ENCODE measurements at regions of chr16 and their contacts with region 1.

Region 1: GRCh38 chr16:85717393-85718121 is 28.8 kb upstream of the GINS2 start:
- DNase-seq: peak; percentile 71 to 84
- ATAC-seq: peak; percentile 47 to 69 (median 60)
- H3K4me3 ChIP-seq: no peak overlapping the region
- H3K27ac ChIP-seq: no peak overlapping the region
- H3K4me1 ChIP-seq: peaks cover 26% of the 10 kb centered on the region
- H3K27me3 ChIP-seq: peaks cover 0 to 2% (median 0%) of the 10 kb centered on the region in 3 donors
- CTCF ChIP-seq: peak; percentile 79

Region 2: GRCh38 chr16:85245307-85246172 is 472.0 kb before region 1 on chr16:
- intact Hi-C with region 1: loop called in 1 of 2 experiments (anchors 5 kb)
- DNase-seq: peak; percentile 66 to 82
- ATAC-seq: peak; percentile 65 to 81 (median 66)
- H3K4me3 ChIP-seq: no peak overlapping the region
- H3K27ac ChIP-seq: no peak overlapping the region
- H3K4me1 ChIP-seq: peaks cover 14% of the 10 kb centered on the region
- H3K27me3 ChIP-seq: no peaks in the 10 kb centered on the region
- CTCF ChIP-seq: peak; percentile 67

Region 3: GRCh38 chr16:85659805-85660495 is 57.6 kb before region 1 on chr16:
- intact Hi-C with region 1: loop called (anchors 5 kb)
- DNase-seq: peak; percentile 73 to 89
- ATAC-seq: peak; percentile 82 to 88 (median 86)
- H3K4me3 ChIP-seq: no peak overlapping the region
- H3K27ac ChIP-seq: peak overlapping the region; percentile 43
- H3K4me1 ChIP-seq: peaks cover 15% of the 10 kb centered on the region
- H3K27me3 ChIP-seq: no peaks in the 10 kb centered on the region
- CTCF ChIP-seq: peak; percentile 90

Region 4: GRCh38 chr16:85675251-85675927 is 42.2 kb before region 1 on chr16:
- intact Hi-C with region 1: loop called in 1 of 2 experiments (anchors 5 kb)
- DNase-seq: no peak
- ATAC-seq: no peak
- H3K4me3 ChIP-seq: no peak overlapping the region
- H3K27ac ChIP-seq: no peak overlapping the region
- H3K4me1 ChIP-seq: peaks cover 16% of the 10 kb centered on the region
- H3K27me3 ChIP-seq: no peaks in the 10 kb centered on the region
- CTCF ChIP-seq: peak; percentile 31

Region 5: DNA sequence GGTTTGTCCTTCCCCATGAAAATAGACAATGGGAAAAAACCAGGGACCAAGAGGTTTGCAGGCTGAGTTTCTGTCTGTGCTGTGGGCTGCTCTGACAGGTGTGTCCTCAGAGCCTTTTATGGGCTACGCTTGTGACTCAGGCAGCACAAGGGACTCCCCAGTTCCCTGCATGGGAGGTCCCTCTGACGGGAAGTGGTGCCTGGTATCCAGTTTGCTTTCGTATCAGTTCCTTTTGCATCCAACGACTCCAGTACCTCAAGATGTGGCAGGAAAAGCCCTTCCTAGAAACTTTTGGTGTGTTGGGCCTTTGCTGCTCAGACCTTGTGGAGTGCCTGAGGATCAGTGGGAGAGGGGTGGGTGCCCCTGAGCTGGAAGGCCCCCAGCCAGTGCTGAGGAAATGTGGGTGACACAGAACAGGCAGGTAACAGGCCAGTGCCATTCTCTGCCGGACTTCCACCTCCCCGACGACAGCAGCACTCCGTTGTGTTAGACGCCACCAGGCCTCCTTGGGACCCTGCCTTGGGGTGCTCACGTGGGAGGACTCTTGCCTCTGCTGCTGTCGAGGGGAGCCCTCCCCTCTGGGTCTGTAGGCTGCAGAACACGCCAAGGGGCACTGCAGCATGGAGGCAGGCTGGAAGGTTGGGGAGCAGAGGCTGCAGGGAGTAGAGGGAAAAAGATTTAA is 143.0 kb after region 1 on chr16:
- intact Hi-C with region 1: no loop called
- DNase-seq: no peak
- ATAC-seq: no peak
- H3K4me3 ChIP-seq: no peak overlapping the region
- H3K27ac ChIP-seq: no peak overlapping the region
- H3K4me1 ChIP-seq: no peaks in the 10 kb centered on the region
- H3K27me3 ChIP-seq: peaks cover 0 to 5% (median 0%) of the 10 kb centered on the region in 3 donors
- CTCF ChIP-seq: no peak

Measured in psoas muscle (tissue), 8 donors.